ENCODE measurements at regions of chr17 and their contacts with region 1.

Region 1: DNA sequence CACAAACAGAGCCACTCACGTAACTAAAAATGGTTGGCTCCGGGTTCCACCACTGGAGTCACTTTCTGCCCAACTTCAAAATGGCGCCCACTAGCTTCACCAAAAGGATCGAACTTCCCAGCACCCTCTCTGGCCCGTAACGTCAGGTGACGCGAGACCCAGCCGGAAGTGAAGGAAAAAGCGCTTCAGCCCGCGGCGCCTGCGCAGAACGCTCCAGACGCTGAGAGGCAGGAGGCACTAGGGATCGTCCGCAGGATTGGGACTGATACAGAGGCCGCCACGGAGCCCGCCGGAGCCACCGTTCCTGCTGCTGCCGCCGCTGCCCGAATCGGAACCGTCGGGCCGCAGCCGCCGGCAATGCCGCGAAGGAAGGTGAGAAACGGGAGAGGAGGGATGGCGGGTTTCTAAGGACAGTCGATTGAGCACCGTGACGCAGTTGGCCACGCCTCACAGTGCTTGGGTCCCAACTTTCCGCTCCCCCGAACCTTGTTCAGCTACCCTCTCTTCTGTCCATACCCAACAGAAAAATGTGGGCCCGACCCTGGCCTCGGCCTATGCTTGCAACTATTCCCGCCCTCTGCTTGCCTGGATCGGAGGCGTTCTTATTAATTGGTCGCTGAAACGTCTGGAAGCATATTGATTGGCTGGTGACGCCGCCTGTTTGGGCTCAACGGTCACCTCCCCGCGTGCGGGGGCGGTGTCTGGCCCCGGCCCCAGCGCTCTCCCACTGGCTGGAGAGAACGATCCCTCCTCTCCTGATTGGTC is at the start of gene KAT7:
- DNase-seq: peak; percentile 96 to 100 (median 99)
- H3K4me3 ChIP-seq: peak within 1 kb of the TSS; percentile 68 to 100 (median 99)
- H3K27ac ChIP-seq: peak within 1 kb of the TSS; percentile 86 to 100 (median 99)
- H3K27me3 ChIP-seq: no peaks in the 10 kb centered on the region
- CTCF ChIP-seq: peak in 54 of 56 donors; percentile 21 to 73 (median 54)
- total RNA-seq, gene KAT7: 73.9 to 129 (median 102) TPM

Region 2: GRCh38 chr17:49414622-49415350 is 373.9 kb before region 1 on chr17 and contains the start of gene PHB1:
- intact Hi-C with region 1: loop called in 1 of 2 experiments (anchors 10 kb)
- DNase-seq: peak; percentile 92 to 99 (median 97)
- H3K4me3 ChIP-seq: peak within 1 kb of the TSS; percentile 70 to 100 (median 92)
- H3K27ac ChIP-seq: peak within 1 kb of the TSS in 16 of 59 donors; percentile 12 to 78 (median 40)
- H3K27me3 ChIP-seq: no peaks in the 10 kb centered on the region
- CTCF ChIP-seq: peak in 36 of 56 donors; percentile 5 to 60 (median 34)
- total RNA-seq, gene PHB1: 64.2 to 118 (median 89.1) TPM

Region 3: DNA sequence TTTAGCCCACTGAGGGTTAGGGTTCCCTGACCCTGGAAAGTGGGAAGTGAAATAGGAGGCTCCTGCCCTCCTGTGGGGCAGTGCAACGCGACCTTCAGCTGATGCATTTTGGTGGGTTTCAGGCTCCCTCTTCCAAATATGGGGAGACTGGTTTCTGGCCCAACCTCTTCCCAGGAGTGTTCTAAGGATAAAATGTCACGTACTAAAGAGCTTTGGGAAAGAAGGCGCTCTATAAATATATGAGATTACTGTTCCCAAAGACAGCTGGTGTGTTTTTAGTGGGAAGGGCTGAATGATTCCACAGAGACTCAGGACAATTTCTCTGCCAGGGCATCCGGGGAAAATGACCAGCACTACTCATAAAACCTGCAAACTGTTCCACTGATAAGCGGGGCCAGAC is 90.7 kb before region 1 on chr17:
- intact Hi-C with region 1: no loop called
- DNase-seq: no peak
- H3K4me3 ChIP-seq: no peak overlapping the region
- H3K27ac ChIP-seq: peak overlapping the region in 2 of 59 donors; percentile 3 to 17
- H3K27me3 ChIP-seq: no peaks in the 10 kb centered on the region
- CTCF ChIP-seq: no peak

Measured in dorsolateral prefrontal cortex (tissue), 120 donors.